K562 (cell line): ENCODE measurements at regions of chr22 and their contacts with region 1.

Region 1: GRCh38 chr22:23256986-23257888 is 76.9 kb downstream of the BCR start:
- DNase-seq: peak in 3 of 4 experiments; percentile 57 to 70 (median 69)
- ATAC-seq: no peak
- H3K4me3 ChIP-seq: no peak overlapping the region
- H3K27ac ChIP-seq: no peak overlapping the region
- H3K4me1 ChIP-seq: peaks cover 0 to 29% of the 10 kb centered on the region in 2 experiments; a peak in 2 of 5 replicates
- H3K27me3 ChIP-seq: no peaks in the 10 kb centered on the region
- CTCF ChIP-seq: no peak
- EP300 ChIP-seq: no peak
- POLR2A ChIP-seq: no peak
- RAD21 ChIP-seq: no peak

Region 2: GRCh38 chr22:23219822-23220484 is 37.3 kb before region 1 on chr22:
- CTCF ChIA-PET with region 1: no interaction called
- POLR2A ChIA-PET with region 1: interaction called, 351 read pairs
- in situ Hi-C with region 1: no loop called
- intact Hi-C with region 1: no loop called
- DNase-seq: peak in 2 of 4 experiments; percentile 90 to 94
- ATAC-seq: peak; percentile 54
- H3K4me3 ChIP-seq: no peak overlapping the region
- H3K27ac ChIP-seq: peak overlapping the region; percentile 6; the same call in 2 of the 3 replicates
- H3K4me1 ChIP-seq: peaks cover 77 to 78% of the 10 kb centered on the region in 2 experiments
- H3K27me3 ChIP-seq: no peaks in the 10 kb centered on the region
- CTCF ChIP-seq: no peak
- EP300 ChIP-seq: no peak
- POLR2A ChIP-seq: no peak
- RAD21 ChIP-seq: no peak